Right ventricle myocardium inferior (tissue), 1 donor: ENCODE measurements at regions of chrX and their contacts with region 1.

Region 1: DNA sequence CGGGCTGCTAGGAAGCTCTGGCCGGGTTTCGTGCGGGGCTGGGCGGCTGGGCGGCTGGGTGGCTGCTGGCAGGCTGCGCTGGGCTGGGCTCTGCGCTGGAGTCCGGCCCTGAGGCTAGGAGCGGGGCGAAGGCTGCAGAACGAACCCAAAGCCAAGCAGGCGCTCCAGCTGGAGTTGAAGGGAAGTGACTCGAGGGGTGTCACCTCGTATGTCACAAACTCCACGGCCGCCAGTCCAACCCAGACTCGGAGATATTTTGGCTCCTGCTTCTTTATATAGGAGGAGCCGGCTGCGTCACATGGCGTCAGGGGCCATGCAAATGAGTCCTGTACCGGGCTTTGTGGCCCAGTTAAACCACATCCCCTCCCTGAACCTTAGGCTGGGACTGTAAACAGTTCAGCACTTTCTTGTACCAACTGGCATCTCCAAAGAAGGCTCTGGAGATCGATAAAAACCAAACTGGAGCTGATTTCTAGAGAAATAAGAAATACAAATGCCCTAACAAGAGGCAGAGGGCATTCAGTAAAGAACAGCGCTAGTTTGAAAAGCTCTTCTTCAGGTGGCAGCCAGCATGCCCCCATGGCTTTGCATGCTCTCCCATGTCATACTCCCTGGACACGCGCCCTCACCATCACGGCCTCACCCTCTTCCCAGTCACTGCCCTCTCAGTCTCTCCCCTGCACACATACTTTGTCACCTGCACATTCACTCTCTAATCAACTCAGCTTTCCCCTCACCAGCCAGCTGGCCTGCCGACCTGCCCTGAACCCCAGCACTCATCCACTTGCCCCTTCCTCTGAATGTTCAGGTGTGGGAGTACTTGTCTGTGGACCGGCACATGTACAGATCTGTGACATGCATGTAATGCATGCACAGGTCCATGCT is 58.5 kb downstream of the TSC22D3 start:
- DNase-seq: peak; percentile 93
- ATAC-seq: peak; percentile 77

Region 2: DNA sequence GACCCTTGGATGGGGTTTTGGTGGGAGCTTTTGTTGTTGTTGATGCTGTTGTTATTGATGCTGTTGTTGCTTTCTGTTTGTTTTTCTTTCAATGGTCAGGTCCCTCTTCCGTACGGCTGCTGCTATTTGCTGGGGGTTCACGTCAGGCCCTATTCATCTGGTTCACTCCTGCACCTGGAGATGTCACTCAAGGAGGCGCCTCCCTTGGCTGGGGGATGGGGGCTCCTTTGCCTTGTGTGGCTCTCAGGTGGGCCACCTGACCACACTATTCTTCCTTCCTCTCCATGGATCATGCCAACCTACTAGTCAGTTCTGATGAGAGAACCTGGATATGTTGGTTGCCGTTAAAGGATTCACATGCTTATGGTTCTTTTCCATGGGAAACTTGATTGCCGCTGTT is 127.8 kb before region 1 on chrX:
- intact Hi-C with region 1: no loop called
- DNase-seq: no peak
- ATAC-seq: no peak

Region 3: DNA sequence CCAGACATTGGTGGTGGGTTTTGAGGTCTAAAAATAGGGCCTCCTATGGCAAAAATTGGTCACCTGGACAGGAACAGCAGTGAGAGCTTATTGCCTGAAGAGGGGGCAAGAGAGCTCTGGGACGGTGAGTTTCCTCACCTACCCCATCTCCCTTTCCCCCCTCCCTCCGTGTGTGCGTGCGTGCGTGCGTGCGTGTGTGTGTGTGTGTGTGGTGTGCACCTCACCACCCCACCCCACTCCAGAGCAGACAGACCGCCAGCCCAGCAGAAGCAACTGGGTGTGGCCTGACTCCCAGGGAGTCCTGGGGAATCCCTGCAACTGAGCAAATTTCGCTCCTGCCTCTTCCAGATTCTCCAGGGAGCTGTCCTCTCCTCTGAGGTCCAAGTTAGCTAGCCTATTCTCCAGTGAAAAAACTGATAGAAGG is 44.1 kb before region 1 on chrX:
- intact Hi-C with region 1: loop called (anchors 1 kb)
- DNase-seq: peak; percentile 90
- ATAC-seq: peak; percentile 49

Region 4: DNA sequence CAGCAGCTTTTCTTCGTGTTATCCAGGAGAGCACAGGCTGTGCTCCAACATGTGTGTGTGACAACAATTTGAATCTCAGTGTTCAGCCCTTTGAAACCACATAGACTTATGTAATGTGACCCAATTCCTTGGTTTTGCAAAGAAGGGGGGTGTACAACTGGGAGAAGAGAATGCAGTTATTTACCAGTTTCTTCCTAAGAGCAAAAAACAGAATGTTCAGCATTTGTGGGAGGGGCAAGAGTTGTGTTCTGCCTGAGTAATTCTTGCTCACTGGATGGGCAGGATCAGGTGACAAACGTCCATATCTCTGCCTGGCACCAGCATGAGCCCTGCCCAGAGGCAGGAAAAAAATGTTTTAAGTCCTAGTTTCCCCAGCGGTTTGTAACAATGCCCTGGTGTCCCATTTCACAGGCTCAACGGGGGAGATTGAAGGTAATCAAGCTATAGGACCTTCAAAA is 16.7 kb before region 1 on chrX:
- intact Hi-C with region 1: no loop called
- DNase-seq: no peak
- ATAC-seq: peak; percentile 89

Region 5: DNA sequence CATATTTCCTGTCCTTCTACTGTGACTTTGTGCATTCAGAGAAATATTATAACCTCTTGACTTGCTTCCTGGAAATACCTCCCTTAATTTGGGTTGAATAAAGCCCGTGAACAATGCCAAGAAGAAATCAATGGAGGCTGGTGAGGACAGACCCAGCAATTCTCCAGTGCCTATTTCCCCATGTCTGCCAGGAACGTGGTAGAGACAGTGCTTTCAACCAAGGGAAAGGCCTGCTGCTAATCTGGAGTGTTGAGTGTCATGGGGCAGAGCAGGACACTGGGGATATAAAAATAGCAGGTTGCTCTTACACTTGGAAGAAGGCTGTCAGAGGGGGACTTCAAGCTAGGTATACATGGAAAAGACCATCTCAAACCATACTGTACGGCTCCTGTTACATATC is 38.7 kb after region 1 on chrX:
- intact Hi-C with region 1: loop called (anchors 5 kb)
- DNase-seq: no peak
- ATAC-seq: peak; percentile 88